ENCODE measurements at regions of chr18 and their contacts with region 1.

Region 1: GRCh38 chr18:24219561-24220317 is 80.9 kb downstream of the CABYR start:
- DNase-seq: no peak
- H3K4me3 Mint-ChIP-seq: no peak overlapping the region
- H3K27ac Mint-ChIP-seq: no peak overlapping the region
- H3K4me1 Mint-ChIP-seq: peaks cover 41% of the 10 kb centered on the region
- H3K27me3 Mint-ChIP-seq: no peaks in the 10 kb centered on the region
- CTCF ChIP-seq: no peak

Region 2: GRCh38 chr18:24138789-24139616 is 80.7 kb before region 1 on chr18 and contains the start of gene CABYR:
- CTCF ChIA-PET with region 1: no interaction called
- intact Hi-C with region 1: loop called (anchors 5 kb)
- DNase-seq: peak; percentile 89
- H3K4me3 Mint-ChIP-seq: peak within 1 kb of the TSS; percentile 85
- H3K27ac Mint-ChIP-seq: peak within 1 kb of the TSS; percentile 96
- H3K4me1 Mint-ChIP-seq: peaks cover 26% of the 10 kb centered on the region
- H3K27me3 Mint-ChIP-seq: no peaks in the 10 kb centered on the region
- CTCF ChIP-seq: no peak
- total RNA-seq, gene CABYR: 10.6 and 12.8 TPM in 2 replicates

Region 3: GRCh38 chr18:24271381-24272331 is 51.9 kb after region 1 on chr18:
- CTCF ChIA-PET with region 1: interaction called, 8 read pairs
- intact Hi-C with region 1: loop called (anchors 2 kb)
- DNase-seq: peak; percentile 77
- H3K4me3 Mint-ChIP-seq: peak overlapping the region; percentile 98
- H3K27ac Mint-ChIP-seq: peak overlapping the region; percentile 61
- H3K4me1 Mint-ChIP-seq: peaks cover 41% of the 10 kb centered on the region
- H3K27me3 Mint-ChIP-seq: no peaks in the 10 kb centered on the region
- CTCF ChIP-seq: no peak

Region 4: DNA sequence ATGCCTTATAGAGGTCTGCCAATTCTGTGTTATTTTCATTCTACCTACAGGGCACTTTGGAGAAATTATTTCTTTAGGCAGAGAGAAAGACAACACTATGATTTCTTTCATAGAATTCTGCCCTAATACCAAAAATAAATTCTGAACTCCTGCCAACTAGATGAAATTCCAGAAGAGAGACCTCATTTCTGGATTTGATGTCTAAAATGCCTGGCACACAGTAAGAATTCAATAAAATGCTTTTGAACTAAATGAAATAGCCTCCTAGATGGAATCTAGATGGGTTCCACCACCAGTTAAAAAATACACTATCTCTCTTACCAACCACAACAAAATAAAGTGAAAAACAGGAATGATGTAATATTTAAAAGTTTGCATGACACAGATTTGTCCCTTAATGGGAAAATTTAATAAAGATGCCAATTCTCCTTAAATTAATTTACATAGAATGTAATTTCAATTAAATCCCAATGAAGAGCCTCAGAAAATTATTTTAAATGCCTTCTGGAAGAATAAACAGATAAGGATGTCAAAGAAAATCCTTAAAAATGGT is 102.9 kb after region 1 on chr18:
- CTCF ChIA-PET with region 1: no interaction called
- intact Hi-C with region 1: no loop called
- DNase-seq: no peak
- H3K4me3 Mint-ChIP-seq: no peak overlapping the region
- H3K27ac Mint-ChIP-seq: no peak overlapping the region
- H3K4me1 Mint-ChIP-seq: no peaks in the 10 kb centered on the region
- H3K27me3 Mint-ChIP-seq: no peaks in the 10 kb centered on the region
- CTCF ChIP-seq: no peak

Measured in Calu3 (cell line).